ENCODE measurements at regions of chr5 and their contacts with region 1.

Region 1: GRCh38 chr5:176447982-176448608 is at the start of gene FAF2:
- DNase-seq: peak; percentile 87 to 98
- H3K4me3 ChIP-seq: peak within 1 kb of the TSS; percentile 88 to 94
- H3K27ac ChIP-seq: peak within 1 kb of the TSS; percentile 91 to 92
- H3K4me1 ChIP-seq: peaks cover 6 to 17% of the 10 kb centered on the region in 2 donors
- H3K27me3 ChIP-seq: no peaks in the 10 kb centered on the region
- CTCF ChIP-seq: peak; percentile 97 to 98 (median 97)
- total RNA-seq, gene FAF2: 18.7 TPM

Region 2: GRCh38 chr5:176400382-176401156 is 47.5 kb before region 1 on chr5:
- intact Hi-C with region 1: no loop called
- DNase-seq: no peak
- H3K4me3 ChIP-seq: no peak overlapping the region
- H3K27ac ChIP-seq: no peak overlapping the region
- H3K4me1 ChIP-seq: no peaks in the 10 kb centered on the region
- H3K27me3 ChIP-seq: no peaks in the 10 kb centered on the region
- CTCF ChIP-seq: no peak

Region 3: DNA sequence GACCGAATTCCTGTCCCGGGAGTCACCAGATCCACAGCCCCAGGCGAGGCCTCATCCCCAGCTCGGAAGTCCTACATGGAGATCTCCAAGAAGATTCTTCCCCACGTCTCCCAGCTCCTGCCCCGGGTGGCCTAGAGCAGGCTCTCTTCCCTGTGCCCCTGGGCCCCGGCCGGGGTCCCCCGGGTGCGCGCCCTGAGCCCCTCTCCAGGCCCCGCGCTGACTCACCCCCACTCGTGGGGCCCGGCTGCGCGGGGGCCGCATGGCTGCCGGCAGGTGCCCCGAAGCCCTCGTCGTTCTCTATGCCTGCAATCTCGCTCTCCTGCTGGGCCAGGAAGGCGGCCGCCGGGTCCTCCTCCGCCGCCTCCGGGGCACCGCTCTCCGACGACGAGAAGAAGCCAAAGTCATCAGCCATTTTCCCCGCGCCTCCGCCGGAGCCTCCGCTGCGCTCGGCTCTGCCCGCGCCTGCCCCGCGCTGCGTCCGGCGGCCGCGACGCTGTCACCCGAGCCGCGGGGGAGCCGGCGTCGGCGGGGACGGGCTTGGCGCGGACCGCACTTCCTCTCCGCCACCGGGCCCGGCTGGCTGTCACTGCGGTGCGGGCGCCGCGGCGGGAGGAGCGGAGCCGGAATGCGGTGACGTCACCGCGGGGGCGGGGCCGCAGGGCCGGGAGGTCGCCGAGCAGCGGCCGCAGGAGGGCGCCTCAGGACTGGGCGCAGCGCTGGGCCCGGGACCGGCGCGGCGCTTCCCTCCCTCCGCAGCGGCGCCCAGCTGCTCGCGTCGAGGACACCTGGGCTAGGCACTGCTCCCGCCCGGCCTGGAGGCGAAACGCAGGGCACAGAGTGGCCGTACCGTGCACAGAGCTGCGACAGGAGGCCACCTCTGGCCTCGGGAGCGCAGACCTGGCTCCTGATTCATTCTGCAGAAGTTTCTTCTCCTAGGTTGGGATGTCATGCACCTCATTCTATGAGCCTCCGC is 31.9 kb before region 1 on chr5 and contains the start of gene CLTB:
- intact Hi-C with region 1: loop called (anchors 1 kb)
- DNase-seq: peak; percentile 49 to 94
- H3K4me3 ChIP-seq: peak within 1 kb of the TSS; percentile 64 to 71
- H3K27ac ChIP-seq: peak within 1 kb of the TSS; percentile 80 to 92
- H3K4me1 ChIP-seq: peaks cover 0 to 32% of the 10 kb centered on the region in 2 donors
- H3K27me3 ChIP-seq: no peaks in the 10 kb centered on the region
- CTCF ChIP-seq: peak; percentile 23 to 97 (median 54)
- total RNA-seq, gene CLTB: 189 TPM